Endothelial cell of umbilical vein (primary cell): ENCODE measurements at regions of chr6 and their contacts with region 1.

Region 1: GRCh38 chr6:64489763-64490162 is 854.2 kb downstream of the PHF3 start:
- DNase-seq: no peak
- H3K4me3 ChIP-seq: no peak overlapping the region
- H3K27ac ChIP-seq: no peak overlapping the region
- H3K4me1 ChIP-seq: no peaks in the 10 kb centered on the region
- H3K27me3 ChIP-seq: no peaks in the 10 kb centered on the region
- CTCF ChIP-seq: no peak
- POLR2A ChIP-seq: no peak

Region 2: DNA sequence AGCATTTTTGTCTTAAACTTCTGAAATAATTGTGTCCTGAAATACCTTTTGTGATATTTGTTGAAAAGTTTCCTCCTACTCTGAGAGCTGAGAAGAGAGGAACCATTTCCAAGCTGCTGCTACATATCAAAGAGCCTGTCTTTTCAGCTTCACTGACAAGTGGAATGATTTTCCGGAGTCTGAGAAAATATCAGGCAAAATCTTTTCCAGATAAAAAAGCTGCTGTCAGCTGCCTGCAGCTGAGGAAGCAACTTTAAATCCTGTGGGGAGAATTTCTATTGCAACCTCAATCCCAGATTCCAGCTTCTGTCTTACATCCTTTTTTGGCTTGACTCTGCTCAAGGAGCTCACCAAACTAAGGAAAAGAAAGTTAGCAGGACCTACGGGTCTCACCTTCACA is 50.2 kb after region 1 on chr6:
- CTCF ChIA-PET with region 1: no interaction called
- POLR2A ChIA-PET with region 1: no interaction called
- dilution Hi-C with region 1: no loop called
- intact Hi-C with region 1: no loop called
- DNase-seq: no peak
- H3K4me3 ChIP-seq: no peak overlapping the region
- H3K27ac ChIP-seq: no peak overlapping the region
- H3K4me1 ChIP-seq: no peaks in the 10 kb centered on the region
- H3K27me3 ChIP-seq: no peaks in the 10 kb centered on the region
- CTCF ChIP-seq: no peak
- POLR2A ChIP-seq: no peak

Region 3: GRCh38 chr6:64683682-64684081 is 193.9 kb after region 1 on chr6:
- CTCF ChIA-PET with region 1: no interaction called
- POLR2A ChIA-PET with region 1: no interaction called
- dilution Hi-C with region 1: no loop called
- intact Hi-C with region 1: loop called (anchors 10 kb)
- DNase-seq: peak; percentile 94
- H3K4me3 ChIP-seq: no peak overlapping the region
- H3K27ac ChIP-seq: peak overlapping the region; percentile 24
- H3K4me1 ChIP-seq: peaks cover 3% of the 10 kb centered on the region
- H3K27me3 ChIP-seq: no peaks in the 10 kb centered on the region
- CTCF ChIP-seq: no peak
- POLR2A ChIP-seq: no peak

Region 4: GRCh38 chr6:64908104-64908503 is 418.3 kb after region 1 on chr6:
- CTCF ChIA-PET with region 1: no interaction called
- POLR2A ChIA-PET with region 1: no interaction called
- dilution Hi-C with region 1: no loop called
- intact Hi-C with region 1: no loop called
- DNase-seq: no peak
- H3K4me3 ChIP-seq: no peak overlapping the region
- H3K27ac ChIP-seq: no peak overlapping the region
- H3K4me1 ChIP-seq: peaks cover 14% of the 10 kb centered on the region
- H3K27me3 ChIP-seq: no peaks in the 10 kb centered on the region
- CTCF ChIP-seq: no peak
- POLR2A ChIP-seq: no peak